ENCODE measurements at regions of chr5 and their contacts with region 1.

Region 1: DNA sequence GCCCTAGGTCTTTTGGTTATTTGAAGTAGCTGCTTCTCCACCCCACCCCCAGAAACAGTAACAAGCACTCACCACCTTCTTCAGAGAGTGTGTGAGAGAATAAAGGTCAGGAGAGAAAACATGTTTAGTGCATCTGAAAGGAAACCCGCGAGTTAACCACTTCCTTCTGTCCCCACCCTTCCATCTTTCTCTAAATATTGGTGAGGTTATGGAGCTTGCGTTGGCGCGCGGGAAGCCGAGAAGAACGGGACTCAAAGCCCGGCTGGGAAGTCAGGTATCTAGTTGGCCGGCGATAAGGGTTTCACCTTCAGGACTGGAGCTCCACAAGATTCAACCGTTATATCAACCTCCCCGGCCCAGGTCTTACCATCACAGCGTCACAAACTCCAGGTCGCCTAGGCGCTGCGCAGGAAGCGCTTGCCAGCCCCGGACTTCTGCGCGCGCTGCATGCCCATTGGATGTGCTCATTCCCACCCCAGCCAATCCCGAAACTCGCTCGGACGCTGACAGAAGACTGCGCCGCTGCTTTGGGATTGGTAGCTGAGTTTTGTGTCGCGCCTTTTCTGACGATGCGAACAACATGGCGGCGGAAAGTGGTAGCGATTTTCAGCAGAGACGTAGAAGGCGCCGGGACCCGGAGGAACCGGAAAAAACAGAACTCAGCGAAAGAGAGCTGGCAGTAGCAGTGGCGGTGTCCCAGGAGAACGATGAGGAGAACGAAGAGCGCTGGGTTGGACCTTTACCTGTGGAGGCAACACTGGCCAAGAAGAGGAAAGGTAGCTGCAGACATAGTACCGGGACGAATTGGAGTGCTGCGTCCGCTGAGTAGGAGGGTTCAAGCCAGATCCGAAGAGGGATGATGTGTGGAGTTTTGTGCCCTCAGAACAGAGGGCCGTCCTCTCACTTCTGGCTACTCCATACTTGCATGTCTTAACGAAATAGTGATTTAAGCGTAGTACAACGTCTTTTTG is at the starts of genes CENPK and PPWD1:
- DNase-seq: peak; percentile 83 to 97 (median 94)
- ATAC-seq: peak; percentile 99
- H3K4me3 ChIP-seq: peak within 1 kb of the TSS; percentile 93
- H3K4me3 Mint-ChIP-seq: peak within 1 kb of the TSS; percentile 92 to 99 (median 96)
- H3K27ac ChIP-seq: peak within 1 kb of the TSS; percentile 93
- H3K27ac Mint-ChIP-seq: peak within 1 kb of the TSS; percentile 97 to 100 (median 98)
- H3K4me1 ChIP-seq: peaks cover 30% of the 10 kb centered on the region in 2 donors
- H3K4me1 Mint-ChIP-seq: peaks cover 22 to 79% (median 59%) of the 10 kb centered on the region in 7 donors
- H3K27me3 ChIP-seq: no peaks in the 10 kb centered on the region
- H3K27me3 Mint-ChIP-seq: no peaks in the 10 kb centered on the region
- total RNA-seq, gene CENPK: 7.2 to 78.8 (median 14.1) TPM
- total RNA-seq, gene PPWD1: 61.7 to 104 (median 81.2) TPM

Region 2: DNA sequence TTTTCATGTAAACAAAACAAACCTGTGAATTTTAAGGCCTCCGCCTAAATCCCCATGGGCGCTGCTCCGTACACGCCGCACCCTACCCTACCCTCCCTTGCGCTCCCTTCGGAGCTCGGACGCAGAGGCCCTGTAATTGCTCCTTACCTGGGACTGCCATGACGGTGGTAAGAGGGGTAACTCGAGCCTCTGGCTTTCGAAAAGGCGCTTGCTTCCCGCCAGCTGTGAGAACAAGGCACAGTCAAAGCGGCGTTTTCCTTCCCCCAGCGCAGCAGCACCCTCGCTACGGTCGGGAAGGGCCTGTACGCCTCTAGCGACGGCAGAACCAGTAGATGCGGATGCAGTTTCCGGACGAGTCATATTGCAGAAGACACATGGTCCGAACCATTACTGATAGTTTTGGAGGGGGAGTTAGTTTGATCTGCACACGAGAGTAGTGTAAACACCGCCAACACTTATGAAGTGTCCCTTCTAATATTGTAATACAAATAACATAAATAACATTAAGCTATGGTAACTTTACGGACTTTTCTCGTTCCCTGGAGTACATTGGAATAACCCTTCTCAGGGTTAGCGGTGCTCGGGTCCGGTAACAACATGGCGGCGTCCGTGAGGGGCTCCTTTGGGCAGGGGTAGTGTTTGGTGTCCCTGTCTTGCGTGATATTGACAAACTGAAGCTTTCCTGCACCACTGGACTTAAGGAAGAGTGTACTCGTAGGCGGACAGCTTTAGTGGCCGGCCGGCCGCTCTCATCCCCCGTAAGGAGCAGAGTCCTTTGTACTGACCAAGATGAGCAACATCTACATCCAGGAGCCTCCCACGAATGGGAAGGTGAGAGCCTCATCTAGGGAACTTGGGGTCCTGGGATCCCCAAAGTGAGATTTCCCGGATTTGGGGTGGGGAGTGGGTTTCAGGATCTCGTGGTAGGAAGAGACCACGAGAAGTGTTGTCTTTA is 794.4 kb before region 1 on chr5 and contains the starts of genes CWC27 and SREK1IP1:
- CTCF ChIA-PET with region 1: no interaction called
- POLR2A ChIA-PET with region 1: interaction called, 10 read pairs
- intact Hi-C with region 1: loop called (anchors 1 kb)
- DNase-seq: peak; percentile 65 to 88 (median 83)
- ATAC-seq: peak; percentile 98
- H3K4me3 ChIP-seq: peak within 1 kb of the TSS; percentile 90
- H3K4me3 Mint-ChIP-seq: peak within 1 kb of the TSS; percentile 94 to 100 (median 99)
- H3K27ac ChIP-seq: peak within 1 kb of the TSS; percentile 88
- H3K27ac Mint-ChIP-seq: peak within 1 kb of the TSS; percentile 96 to 100 (median 98)
- H3K4me1 ChIP-seq: peaks cover 21 to 37% of the 10 kb centered on the region in 2 donors
- H3K4me1 Mint-ChIP-seq: peaks cover 34 to 80% (median 77%) of the 10 kb centered on the region in 7 donors
- H3K27me3 ChIP-seq: no peaks in the 10 kb centered on the region
- H3K27me3 Mint-ChIP-seq: no peaks in the 10 kb centered on the region
- total RNA-seq, gene CWC27: 17.8 to 27.4 (median 21.0) TPM
- total RNA-seq, gene SREK1IP1: 11.7 to 29.9 (median 21.7) TPM

Region 3: GRCh38 chr5:65035211-65036206 is 527.5 kb before region 1 on chr5:
- CTCF ChIA-PET with region 1: no interaction called
- POLR2A ChIA-PET with region 1: no interaction called
- intact Hi-C with region 1: loop called in 1 of 2 experiments (anchors 2 kb)
- DNase-seq: peak; percentile 60 to 92 (median 85)
- ATAC-seq: peak; percentile 88
- H3K4me3 ChIP-seq: peak overlapping the region; percentile 78
- H3K4me3 Mint-ChIP-seq: peak overlapping the region; percentile 74 to 94 (median 82)
- H3K27ac ChIP-seq: peak overlapping the region; percentile 84
- H3K27ac Mint-ChIP-seq: peak overlapping the region; percentile 84 to 96 (median 90)
- H3K4me1 ChIP-seq: peaks cover 20% of the 10 kb centered on the region in 2 donors
- H3K4me1 Mint-ChIP-seq: peaks cover 3 to 36% (median 29%) of the 10 kb centered on the region in 7 donors
- H3K27me3 ChIP-seq: no peaks in the 10 kb centered on the region
- H3K27me3 Mint-ChIP-seq: no peaks in the 10 kb centered on the region

Region 4: GRCh38 chr5:65426656-65427055 is 136.4 kb before region 1 on chr5:
- CTCF ChIA-PET with region 1: no interaction called
- POLR2A ChIA-PET with region 1: no interaction called
- intact Hi-C with region 1: no loop called
- DNase-seq: no peak
- ATAC-seq: no peak
- H3K4me3 ChIP-seq: no peak overlapping the region
- H3K4me3 Mint-ChIP-seq: no peak overlapping the region
- H3K27ac ChIP-seq: no peak overlapping the region
- H3K27ac Mint-ChIP-seq: no peak overlapping the region
- H3K4me1 ChIP-seq: no peaks in the 10 kb centered on the region
- H3K4me1 Mint-ChIP-seq: no peaks in the 10 kb centered on the region
- H3K27me3 ChIP-seq: no peaks in the 10 kb centered on the region
- H3K27me3 Mint-ChIP-seq: no peaks in the 10 kb centered on the region

Region 5: DNA sequence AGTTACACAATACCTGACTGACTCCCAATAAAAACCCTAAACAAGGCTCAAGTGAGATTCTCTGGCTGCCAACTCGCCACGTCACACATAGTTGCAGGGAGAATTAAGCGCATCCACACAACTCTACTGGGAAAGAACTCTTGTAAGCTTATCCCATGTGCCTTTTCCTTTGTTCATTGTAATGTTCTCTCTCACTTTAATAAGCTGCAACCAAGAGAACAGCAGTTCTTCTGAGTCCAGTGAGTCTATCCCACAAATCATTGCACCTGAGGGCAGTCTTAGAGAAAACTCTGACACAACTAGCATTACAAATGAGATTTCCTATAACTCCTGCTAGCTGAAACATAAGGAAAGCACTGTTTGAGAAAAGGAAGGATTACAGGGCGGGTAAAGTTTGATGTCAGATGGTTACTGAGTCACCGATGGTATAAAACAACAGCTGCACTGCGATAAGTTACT is 27.5 kb before region 1 on chr5:
- CTCF ChIA-PET with region 1: no interaction called
- POLR2A ChIA-PET with region 1: no interaction called
- intact Hi-C with region 1: no loop called
- DNase-seq: no peak
- ATAC-seq: no peak
- H3K4me3 ChIP-seq: no peak overlapping the region
- H3K4me3 Mint-ChIP-seq: no peak overlapping the region
- H3K27ac ChIP-seq: no peak overlapping the region
- H3K27ac Mint-ChIP-seq: no peak overlapping the region
- H3K4me1 ChIP-seq: no peaks in the 10 kb centered on the region
- H3K4me1 Mint-ChIP-seq: peaks cover 0 to 2% (median 0%) of the 10 kb centered on the region in 7 donors
- H3K27me3 ChIP-seq: no peaks in the 10 kb centered on the region
- H3K27me3 Mint-ChIP-seq: no peaks in the 10 kb centered on the region

Region 6: GRCh38 chr5:65588694-65589093 is 25.7 kb after region 1 on chr5:
- CTCF ChIA-PET with region 1: no interaction called
- POLR2A ChIA-PET with region 1: interaction called, 3 read pairs
- intact Hi-C with region 1: loop called in 1 of 2 experiments (anchors 2 kb)
- DNase-seq: peak in 1 of 9 donors; percentile 5
- ATAC-seq: no peak
- H3K4me3 ChIP-seq: no peak overlapping the region
- H3K4me3 Mint-ChIP-seq: no peak overlapping the region
- H3K27ac ChIP-seq: no peak overlapping the region
- H3K27ac Mint-ChIP-seq: no peak overlapping the region
- H3K4me1 ChIP-seq: no peaks in the 10 kb centered on the region
- H3K4me1 Mint-ChIP-seq: peaks cover 0 to 6% (median 0%) of the 10 kb centered on the region in 7 donors
- H3K27me3 ChIP-seq: no peaks in the 10 kb centered on the region
- H3K27me3 Mint-ChIP-seq: no peaks in the 10 kb centered on the region

Region 7: DNA sequence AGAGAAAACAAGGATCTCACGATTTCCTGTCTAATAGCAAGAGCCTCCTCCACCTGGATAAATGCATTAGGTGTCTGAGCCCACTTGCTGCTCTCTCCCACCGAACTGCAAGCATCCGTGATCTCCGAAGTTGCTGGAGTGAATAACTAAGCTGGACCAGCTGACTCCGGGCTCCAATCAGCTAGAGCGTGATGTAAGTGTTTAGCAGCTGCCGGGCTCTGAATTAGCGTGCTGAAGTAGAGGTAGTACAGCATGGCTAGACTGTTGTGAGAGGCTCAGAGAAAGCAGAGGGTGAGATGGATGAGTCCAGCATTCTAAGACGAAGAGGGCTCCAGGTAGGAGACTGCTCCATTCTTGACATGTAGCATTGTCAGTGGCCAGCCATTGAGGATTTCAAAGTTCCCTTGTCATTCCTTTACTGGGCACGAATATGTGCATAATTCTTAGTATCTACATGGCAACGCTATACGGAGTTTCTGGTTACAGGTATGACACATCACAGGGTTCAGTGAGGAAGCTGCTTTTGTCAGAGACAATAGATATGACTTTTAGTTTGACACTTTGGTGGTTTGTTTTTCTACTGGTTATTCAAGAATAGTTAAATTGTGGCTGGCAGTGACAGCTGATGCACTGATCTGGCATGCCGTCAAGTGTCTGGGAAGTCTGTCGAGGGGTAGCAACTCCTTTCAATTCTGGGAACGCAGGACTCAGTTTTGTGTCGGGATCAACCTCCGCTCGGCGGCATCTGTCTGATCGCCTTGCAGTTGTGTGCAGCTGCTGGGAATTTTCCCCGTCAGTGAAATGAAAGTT is 1265.7 kb after region 1 on chr5:
- CTCF ChIA-PET with region 1: no interaction called
- POLR2A ChIA-PET with region 1: no interaction called
- intact Hi-C with region 1: loop called in 1 of 2 experiments (anchors 5 kb)
- DNase-seq: peak; percentile 14 to 67 (median 55)
- ATAC-seq: peak; percentile 93
- H3K4me3 ChIP-seq: peak overlapping the region; percentile 36
- H3K4me3 Mint-ChIP-seq: peak overlapping the region; percentile 72 to 95 (median 84)
- H3K27ac ChIP-seq: peak overlapping the region; percentile 31
- H3K27ac Mint-ChIP-seq: peak overlapping the region; percentile 12 to 92 (median 71)
- H3K4me1 ChIP-seq: peaks cover 0 to 4% of the 10 kb centered on the region in 2 donors
- H3K4me1 Mint-ChIP-seq: peaks cover 12 to 69% (median 19%) of the 10 kb centered on the region in 7 donors
- H3K27me3 ChIP-seq: no peaks in the 10 kb centered on the region
- H3K27me3 Mint-ChIP-seq: peaks cover 0 to 50% (median 26%) of the 10 kb centered on the region in 5 donors

Measured in naive thymus-derived CD4-positive, alpha-beta T cell (primary cell).